Aorta (tissue), 5 donors: ENCODE measurements at regions of chr1 and their contacts with region 1.

Region 1: GRCh38 chr1:15206418-15207030 is 40.5 kb upstream of the FHAD1 start:
- DNase-seq: peak; percentile 26 to 62
- ATAC-seq: no peak
- H3K4me3 ChIP-seq: no peak overlapping the region
- H3K27ac ChIP-seq: peak overlapping the region in 1 of 2 donors; percentile 41
- H3K4me1 ChIP-seq: peaks cover 2 to 7% of the 10 kb centered on the region in 2 donors
- H3K27me3 ChIP-seq: no peaks in the 10 kb centered on the region

Region 2: DNA sequence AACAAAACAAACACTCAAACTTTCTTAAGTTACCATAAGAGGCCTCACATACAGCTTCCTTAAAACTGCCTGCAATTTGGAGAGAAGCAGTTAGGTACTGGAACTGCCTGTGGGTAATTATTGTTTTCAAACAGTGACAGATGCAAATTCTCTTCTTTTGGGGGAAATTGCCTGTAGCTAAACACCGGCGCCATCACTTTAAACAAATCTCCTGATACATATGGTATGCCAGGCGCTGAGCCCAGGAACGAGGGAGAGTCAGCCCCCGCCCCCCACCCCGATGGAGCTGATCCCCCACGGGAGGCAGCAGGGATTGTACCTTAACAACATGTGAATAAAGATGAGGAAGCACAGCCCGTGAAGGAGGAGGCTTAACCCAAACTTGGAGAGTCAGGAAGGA is 45.9 kb before region 1 on chr1:
- intact Hi-C with region 1: loop called (anchors 2 to 5 kb)
- DNase-seq: no peak
- ATAC-seq: no peak
- H3K4me3 ChIP-seq: no peak overlapping the region
- H3K27ac ChIP-seq: no peak overlapping the region
- H3K4me1 ChIP-seq: no peaks in the 10 kb centered on the region
- H3K27me3 ChIP-seq: no peaks in the 10 kb centered on the region